ENCODE measurements at regions of chr6 and their contacts with region 1.

Region 1: GRCh38 chr6:155333414-155333813 is 19.1 kb upstream of the TFB1M start:
- DNase-seq: no peak
- H3K4me3 Mint-ChIP-seq: peak overlapping the region; percentile 28
- H3K27ac Mint-ChIP-seq: peak overlapping the region; percentile 76
- H3K4me1 Mint-ChIP-seq: peaks cover 50% of the 10 kb centered on the region
- H3K27me3 Mint-ChIP-seq: no peaks in the 10 kb centered on the region

Region 2: DNA sequence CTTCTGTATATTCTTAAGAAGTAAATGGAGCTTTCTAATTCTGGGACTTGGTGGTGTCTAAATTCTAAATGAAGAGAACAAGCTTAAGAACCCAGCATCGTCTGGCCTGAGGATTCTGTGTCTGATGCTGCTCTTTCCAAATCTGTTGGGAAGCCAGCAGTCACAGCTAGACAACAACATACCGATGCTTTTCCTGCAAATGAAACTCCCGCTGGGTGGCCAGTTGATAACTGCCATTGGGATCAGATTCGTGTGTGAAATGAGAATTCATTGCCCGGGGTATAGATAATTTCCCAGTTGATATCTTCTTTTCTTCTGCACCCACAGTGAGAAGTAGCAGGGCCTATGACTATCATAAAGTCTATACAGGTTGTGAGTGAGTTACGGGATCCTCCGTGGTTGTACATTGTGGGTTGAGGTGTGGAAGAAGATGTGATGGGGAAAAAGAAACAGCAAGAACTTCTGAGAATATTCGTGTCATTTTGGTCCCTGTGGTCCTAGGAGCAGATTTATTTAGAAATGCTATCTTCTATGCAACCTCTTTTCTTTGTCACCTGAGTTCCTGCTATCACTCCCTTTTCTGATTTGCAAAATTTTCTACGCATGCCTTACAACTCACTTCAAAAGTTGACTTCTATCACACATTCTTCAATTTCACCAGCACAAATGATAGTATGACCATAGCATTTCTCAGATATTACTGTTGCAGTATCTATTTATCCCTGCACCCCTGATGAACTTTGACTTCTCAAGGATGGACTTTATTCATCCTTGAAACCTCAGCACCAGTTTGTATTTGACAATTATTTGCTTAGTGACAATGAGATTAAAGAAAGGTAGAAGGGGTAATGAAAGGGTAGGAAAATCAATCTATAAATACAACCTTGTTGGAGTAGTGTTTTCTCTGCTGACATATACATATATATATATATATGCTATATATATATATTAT is 111.8 kb after region 1 on chr6:
- intact Hi-C with region 1: loop called (anchors 1 kb)
- DNase-seq: peak; percentile 11
- H3K4me3 Mint-ChIP-seq: no peak overlapping the region
- H3K27ac Mint-ChIP-seq: no peak overlapping the region
- H3K4me1 Mint-ChIP-seq: peaks cover 18% of the 10 kb centered on the region
- H3K27me3 Mint-ChIP-seq: peaks cover 5% of the 10 kb centered on the region

Region 3: GRCh38 chr6:155717374-155717773 is 384.0 kb after region 1 on chr6:
- intact Hi-C with region 1: loop called (anchors 10 kb)
- DNase-seq: no peak
- H3K4me3 Mint-ChIP-seq: no peak overlapping the region
- H3K27ac Mint-ChIP-seq: no peak overlapping the region
- H3K4me1 Mint-ChIP-seq: no peaks in the 10 kb centered on the region
- H3K27me3 Mint-ChIP-seq: peaks cover 1% of the 10 kb centered on the region

Measured in activated T-helper 1 cell treated with anti-CD3 and anti-CD28 coated beads, Interleukin-12 subunit alpha, Interleukin-12 subunit beta, Interleukin-2, Interleukin-4 antibody, amounts not matched to agents 30 ng/mL and 10 ng/mL and 1 ng/mL, durations not matched to agents 14 hours and 24 hours and 36 hours (primary cell).